AG04450 (cell line): ENCODE measurements at regions of chr22 and their contacts with region 1.

Region 1: DNA sequence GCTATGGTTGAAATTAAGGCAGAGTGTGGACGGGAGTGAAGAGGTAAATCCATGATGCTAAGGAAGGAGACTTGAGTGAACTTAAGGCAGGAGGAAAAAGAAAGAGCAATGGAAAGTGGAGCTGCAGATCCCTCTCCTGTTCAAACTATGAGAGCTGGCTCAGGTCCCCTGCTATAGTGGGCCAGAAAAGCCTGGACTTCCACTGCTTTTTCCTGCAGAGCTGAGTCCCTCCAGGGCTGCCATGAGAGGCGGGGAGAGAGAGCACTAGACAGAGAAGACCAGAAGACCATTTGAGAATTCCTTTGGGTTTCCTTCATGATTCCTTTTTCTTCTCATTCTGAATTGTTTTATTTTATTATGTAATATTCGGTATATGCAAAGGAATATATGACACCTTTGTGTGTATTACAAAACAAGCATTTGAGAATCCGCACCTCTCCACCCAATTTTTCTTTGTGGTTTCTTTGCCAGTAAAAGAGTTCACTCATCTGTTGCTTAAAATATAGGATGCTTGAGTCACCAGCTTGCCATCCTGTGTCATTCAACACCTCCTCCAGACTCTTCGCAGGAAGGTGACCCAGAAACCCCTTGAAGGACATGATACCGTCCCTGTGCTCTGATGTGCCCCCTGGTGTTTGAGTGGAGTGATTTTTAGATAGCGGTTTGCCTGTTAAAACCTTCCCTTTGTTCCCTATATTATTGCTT is 24.4 kb downstream of the SREBF2 start:
- DNase-seq: no peak
- H3K4me3 ChIP-seq: no peak overlapping the region
- H3K27ac ChIP-seq: no peak overlapping the region
- H3K27me3 ChIP-seq: no peaks in the 10 kb centered on the region
- CTCF ChIP-seq: peak; percentile 73

Region 2: DNA sequence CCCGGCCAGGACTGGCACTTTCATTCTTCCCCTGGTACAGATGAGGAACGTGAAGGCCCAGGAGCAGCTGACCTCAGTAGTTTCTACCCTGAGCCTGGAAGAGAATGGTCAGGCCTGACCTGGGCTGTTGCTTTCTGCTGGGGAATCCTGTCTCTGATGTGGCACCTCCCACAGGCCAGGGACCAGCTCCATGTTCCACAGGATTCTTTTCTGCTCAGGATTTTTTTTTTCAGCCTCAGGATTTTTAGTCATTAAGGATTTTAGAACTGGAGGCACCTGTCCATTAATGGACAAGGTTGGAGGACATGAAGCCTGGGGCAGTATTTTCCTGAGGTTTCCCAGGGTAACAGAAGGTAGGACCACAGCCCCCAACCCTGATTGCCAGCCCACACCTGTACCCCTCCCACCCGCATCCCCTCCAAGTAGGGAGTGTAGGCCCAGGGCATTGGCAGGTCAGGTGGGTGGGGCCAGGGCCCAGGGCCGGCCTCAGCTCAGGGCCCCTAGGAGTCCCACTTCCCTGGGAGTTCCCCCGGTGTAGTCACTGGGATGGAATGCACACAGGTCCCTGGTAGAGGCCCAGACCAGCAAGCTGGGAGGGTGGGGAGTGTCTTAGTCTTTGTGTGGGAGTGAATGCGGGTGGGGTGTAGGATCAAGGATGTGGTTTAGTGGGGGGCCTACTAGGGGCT is 1269.3 kb after region 1 on chr22:
- CTCF ChIA-PET with region 1: no interaction called
- POLR2A ChIA-PET with region 1: interaction called, 11 read pairs
- DNase-seq: peak; percentile 60
- H3K4me3 ChIP-seq: no peak overlapping the region
- H3K27ac ChIP-seq: peak overlapping the region; percentile 39
- H3K27me3 ChIP-seq: no peaks in the 10 kb centered on the region
- CTCF ChIP-seq: no peak